Activated CD8-positive, alpha-beta memory T cell treated with anti-CD3 and anti-CD28 coated beads, Interleukin-2, amount 10 ng/mL, durations not matched to agents 7 days and 5 days (primary cell): ENCODE measurements at regions of chr19 and their contacts with region 1.

Region 1: DNA sequence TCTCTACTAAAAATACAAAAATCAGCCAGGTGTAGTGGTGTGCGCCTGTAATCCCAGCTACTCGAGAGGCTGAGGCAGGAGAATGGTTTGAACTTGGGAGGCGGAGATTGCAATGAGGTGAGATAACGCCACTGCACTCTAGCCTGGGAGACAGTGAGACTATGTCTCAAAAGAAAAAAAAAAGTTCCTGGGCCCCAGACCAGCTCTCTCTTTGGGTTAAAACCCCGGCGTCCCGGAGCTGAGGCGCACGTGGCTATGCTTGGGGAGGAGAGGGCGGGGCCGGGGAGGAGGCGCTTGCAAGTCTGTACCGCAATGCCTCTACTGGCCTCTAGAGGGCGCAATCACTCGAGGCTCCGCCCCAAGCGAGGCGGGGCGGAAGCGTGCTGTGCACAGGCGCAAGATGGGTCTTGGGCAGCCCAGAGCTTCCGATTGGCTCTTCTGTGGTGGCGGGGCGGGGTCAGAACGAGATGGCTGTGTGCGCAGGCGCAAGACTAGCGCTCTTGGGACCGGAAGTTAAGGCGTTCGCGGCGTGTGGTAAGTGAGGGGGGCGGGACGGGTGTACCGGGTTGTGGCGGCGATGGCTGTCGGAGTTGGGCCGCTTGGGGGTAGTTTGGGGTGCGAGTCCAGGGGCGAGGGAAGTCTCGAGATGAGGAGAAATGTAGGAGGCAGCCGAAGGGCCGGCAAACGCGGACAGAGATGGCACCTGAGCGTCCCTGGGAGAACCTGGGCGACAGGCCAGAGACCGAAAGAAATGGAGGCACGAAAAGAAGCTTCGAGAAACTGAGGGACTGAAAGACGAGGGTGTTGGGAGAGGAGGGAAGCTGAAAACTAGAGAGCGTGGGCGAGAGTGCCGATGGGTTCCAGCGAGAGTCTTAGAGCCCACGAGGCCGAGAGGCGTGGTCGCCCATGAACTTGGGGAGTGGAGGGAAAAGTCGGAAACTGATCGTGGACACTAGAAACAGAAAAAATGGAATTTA is at the start of gene DHX34:
- DNase-seq: peak; percentile 99
- ATAC-seq: peak; percentile 99
- H3K4me3 Mint-ChIP-seq: peak within 1 kb of the TSS; percentile 94
- H3K27ac Mint-ChIP-seq: peak within 1 kb of the TSS; percentile 90
- H3K4me1 Mint-ChIP-seq: peaks cover 33% of the 10 kb centered on the region
- H3K27me3 Mint-ChIP-seq: no peaks in the 10 kb centered on the region
- total RNA-seq, gene DHX34: 11.7 to 14.3 TPM

Region 2: GRCh38 chr19:47330466-47330869 is 18.6 kb before region 1 on chr19:
- CTCF ChIA-PET with region 1: interaction called, 18 read pairs
- DNase-seq: no peak
- ATAC-seq: no peak
- H3K4me3 Mint-ChIP-seq: no peak overlapping the region
- H3K27ac Mint-ChIP-seq: no peak overlapping the region
- H3K4me1 Mint-ChIP-seq: no peaks in the 10 kb centered on the region
- H3K27me3 Mint-ChIP-seq: peaks cover 1% of the 10 kb centered on the region

Region 3: DNA sequence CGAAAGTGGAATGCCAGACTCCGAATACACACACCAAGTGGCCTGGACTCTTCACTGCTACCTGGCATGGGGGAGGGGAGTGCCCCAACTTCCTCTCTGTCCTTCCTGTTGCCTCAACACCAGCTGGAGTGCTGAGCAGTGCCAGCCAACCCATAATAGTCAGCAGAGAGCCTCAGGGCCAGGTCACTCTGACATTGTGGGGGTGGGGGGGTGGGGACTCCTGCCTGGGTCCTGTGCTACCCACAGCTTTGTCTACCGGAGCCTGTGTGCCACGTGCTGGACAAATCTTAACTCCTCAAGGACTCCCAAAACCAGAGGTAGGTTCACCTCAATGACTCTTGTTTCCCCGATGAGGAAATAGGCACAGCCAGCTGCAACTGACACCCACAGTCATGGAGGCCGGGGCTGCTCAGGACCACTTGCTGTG is 12.2 kb before region 1 on chr19:
- CTCF ChIA-PET with region 1: interaction called, 18 read pairs
- DNase-seq: peak; percentile 50
- ATAC-seq: no peak
- H3K4me3 Mint-ChIP-seq: no peak overlapping the region
- H3K27ac Mint-ChIP-seq: peak overlapping the region; percentile 51
- H3K4me1 Mint-ChIP-seq: peaks cover 10% of the 10 kb centered on the region
- H3K27me3 Mint-ChIP-seq: no peaks in the 10 kb centered on the region